RWPE1 (cell line): ENCODE measurements at regions of chr11 and their contacts with region 1.

Region 1: GRCh38 chr11:118907051-118908042 is 18.4 kb downstream of the BCL9L start:
- DNase-seq: no peak
- H3K27ac ChIP-seq: peak overlapping the region; percentile 100
- CTCF ChIP-seq: peak; percentile 83

Region 2: GRCh38 chr11:118838905-118839553 is 68.3 kb before region 1 on chr11:
- CTCF ChIA-PET with region 1: no interaction called
- POLR2A ChIA-PET with region 1: no interaction called
- DNase-seq: no peak
- H3K27ac ChIP-seq: no peak overlapping the region
- CTCF ChIP-seq: no peak

Region 3: DNA sequence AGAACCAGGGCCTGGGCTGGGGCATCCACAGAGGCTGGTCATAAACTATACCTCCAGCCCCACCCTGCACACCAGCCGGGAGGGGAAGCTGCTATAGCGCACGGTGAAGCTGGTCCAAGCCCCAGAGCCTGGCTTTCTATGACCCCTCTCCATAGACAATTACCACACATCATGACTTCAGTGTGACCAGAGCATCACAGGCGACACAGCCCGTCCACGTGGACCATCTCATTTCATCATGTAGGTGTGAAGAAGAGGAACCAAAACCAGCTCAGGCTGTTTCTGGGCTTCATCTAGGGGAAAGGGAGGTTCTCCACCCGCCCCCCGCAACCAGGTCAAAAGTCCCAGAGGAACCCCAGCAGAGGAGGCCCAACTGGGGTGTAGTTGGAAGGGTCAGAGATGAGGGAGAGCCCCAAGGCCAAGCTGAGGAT is 20.7 kb before region 1 on chr11:
- CTCF ChIA-PET with region 1: no interaction called
- POLR2A ChIA-PET with region 1: no interaction called
- DNase-seq: no peak
- H3K27ac ChIP-seq: peak overlapping the region; percentile 49
- CTCF ChIP-seq: no peak

Region 4: DNA sequence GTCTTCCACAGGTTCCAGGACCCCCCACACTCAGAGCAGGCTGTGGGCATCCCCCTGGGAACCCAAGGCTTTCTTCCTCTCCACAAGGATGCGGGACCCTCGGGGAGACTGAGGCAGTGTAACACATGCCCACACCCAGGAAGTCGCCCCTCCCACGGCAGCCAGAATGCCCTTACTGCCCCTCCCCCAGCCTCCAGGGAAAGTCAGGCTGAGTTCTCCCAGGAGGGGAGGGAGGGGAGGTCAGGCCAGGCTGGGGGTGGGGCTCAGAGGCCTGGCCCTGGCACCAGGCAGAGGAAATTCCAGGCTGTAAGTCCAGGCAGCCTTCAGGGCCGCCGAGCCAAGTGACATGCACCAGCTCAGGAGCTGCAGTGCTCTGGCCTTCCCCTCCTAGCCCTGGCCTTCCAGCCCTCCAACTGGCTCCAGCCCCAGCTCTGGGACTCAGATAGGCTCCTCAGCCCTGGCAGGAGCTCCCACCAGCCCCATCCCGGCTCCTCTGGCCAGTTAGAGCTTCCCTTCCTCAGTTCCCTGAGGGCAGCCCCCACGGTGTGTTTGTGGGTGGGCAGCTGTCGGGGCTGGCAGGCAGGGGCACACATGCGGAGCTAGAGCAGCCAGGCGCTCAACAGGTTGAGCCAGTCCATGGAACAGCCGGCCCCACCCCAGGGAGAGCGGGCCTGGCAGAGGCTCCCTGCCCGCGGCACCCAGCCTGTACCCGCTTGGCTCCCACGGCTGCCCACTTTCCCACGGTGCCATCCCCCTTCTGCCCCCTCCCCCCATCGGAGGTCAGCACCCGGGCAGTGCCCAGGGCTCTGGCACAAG is 14.8 kb after region 1 on chr11:
- CTCF ChIA-PET with region 1: interaction called, 17 read pairs
- POLR2A ChIA-PET with region 1: interaction called, 14 read pairs
- DNase-seq: peak; percentile 71
- H3K27ac ChIP-seq: peak overlapping the region; percentile 100
- CTCF ChIP-seq: no peak

Region 5: GRCh38 chr11:118928108-118928870 is 20.9 kb after region 1 on chr11:
- CTCF ChIA-PET with region 1: interaction called, 17 read pairs
- POLR2A ChIA-PET with region 1: interaction called, 14 read pairs
- DNase-seq: peak; percentile 98
- H3K27ac ChIP-seq: peak overlapping the region; percentile 100
- CTCF ChIP-seq: peak; percentile 92

Region 6: GRCh38 chr11:118956094-118956846 is 48.9 kb after region 1 on chr11 and contains the start of gene UPK2:
- CTCF ChIA-PET with region 1: interaction called, 14 read pairs
- POLR2A ChIA-PET with region 1: no interaction called
- DNase-seq: peak; percentile 93
- H3K27ac ChIP-seq: no peak within 1 kb of the TSS
- CTCF ChIP-seq: peak; percentile 91

Region 7: GRCh38 chr11:119101759-119102423 is 194.5 kb after region 1 on chr11 and contains the start of gene DPAGT1:
- CTCF ChIA-PET with region 1: no interaction called
- POLR2A ChIA-PET with region 1: interaction called, 12 read pairs
- DNase-seq: peak; percentile 92
- H3K27ac ChIP-seq: peak within 1 kb of the TSS; percentile 97
- CTCF ChIP-seq: no peak